T-cell (primary cell): ENCODE measurements at regions of chr2 and their contacts with region 1.

Region 1: GRCh38 chr2:145286716-145287275 is 766.9 kb upstream of the ZEB2 start:
- DNase-seq: no peak
- ATAC-seq: no peak
- H3K4me3 ChIP-seq: no peak overlapping the region
- H3K4me3 Mint-ChIP-seq: no peak overlapping the region
- H3K27ac ChIP-seq: no peak overlapping the region
- H3K27ac Mint-ChIP-seq: no peak overlapping the region
- H3K4me1 ChIP-seq: no peaks in the 10 kb centered on the region
- H3K4me1 Mint-ChIP-seq: no peaks in the 10 kb centered on the region
- H3K27me3 ChIP-seq: no peaks in the 10 kb centered on the region
- H3K27me3 Mint-ChIP-seq: no peaks in the 10 kb centered on the region

Region 2: DNA sequence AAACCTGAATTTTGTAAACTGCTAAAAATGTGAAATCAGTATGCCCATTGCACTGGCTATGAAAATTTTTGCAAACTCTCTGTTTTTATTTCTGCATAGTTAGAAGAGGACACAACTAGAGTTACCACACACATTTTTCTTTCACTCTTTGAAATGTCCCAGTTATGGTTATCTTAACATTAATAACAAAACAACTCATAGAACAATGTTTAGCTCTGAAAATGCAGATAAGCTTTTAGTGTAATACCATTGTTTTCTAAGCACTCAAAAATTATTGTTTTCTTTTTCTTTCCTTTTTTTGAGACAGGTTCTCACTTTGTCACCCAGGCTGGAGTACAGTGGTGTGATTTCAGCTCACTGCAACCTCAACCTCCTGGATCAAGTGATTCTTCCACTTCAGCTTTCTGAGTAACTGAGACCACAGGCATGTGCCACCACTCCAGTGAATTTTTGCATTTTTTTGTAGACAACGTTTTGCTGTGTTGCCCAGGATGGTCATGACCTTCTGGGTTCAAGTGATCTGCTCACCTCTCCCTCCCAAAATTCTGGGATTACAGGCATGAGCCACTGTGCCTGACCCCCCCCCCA is 437.6 kb after region 1 on chr2:
- CTCF ChIA-PET with region 1: interaction called in 1 of 2 experiments, 11 read pairs
- POLR2A ChIA-PET with region 1: no interaction called
- DNase-seq: no peak
- ATAC-seq: no peak
- H3K4me3 ChIP-seq: no peak overlapping the region
- H3K4me3 Mint-ChIP-seq: no peak overlapping the region
- H3K27ac ChIP-seq: no peak overlapping the region
- H3K27ac Mint-ChIP-seq: no peak overlapping the region
- H3K4me1 ChIP-seq: no peaks in the 10 kb centered on the region
- H3K4me1 Mint-ChIP-seq: no peaks in the 10 kb centered on the region
- H3K27me3 ChIP-seq: no peaks in the 10 kb centered on the region
- H3K27me3 Mint-ChIP-seq: no peaks in the 10 kb centered on the region